ENCODE measurements at regions of chr11 and their contacts with region 1.

Region 1: DNA sequence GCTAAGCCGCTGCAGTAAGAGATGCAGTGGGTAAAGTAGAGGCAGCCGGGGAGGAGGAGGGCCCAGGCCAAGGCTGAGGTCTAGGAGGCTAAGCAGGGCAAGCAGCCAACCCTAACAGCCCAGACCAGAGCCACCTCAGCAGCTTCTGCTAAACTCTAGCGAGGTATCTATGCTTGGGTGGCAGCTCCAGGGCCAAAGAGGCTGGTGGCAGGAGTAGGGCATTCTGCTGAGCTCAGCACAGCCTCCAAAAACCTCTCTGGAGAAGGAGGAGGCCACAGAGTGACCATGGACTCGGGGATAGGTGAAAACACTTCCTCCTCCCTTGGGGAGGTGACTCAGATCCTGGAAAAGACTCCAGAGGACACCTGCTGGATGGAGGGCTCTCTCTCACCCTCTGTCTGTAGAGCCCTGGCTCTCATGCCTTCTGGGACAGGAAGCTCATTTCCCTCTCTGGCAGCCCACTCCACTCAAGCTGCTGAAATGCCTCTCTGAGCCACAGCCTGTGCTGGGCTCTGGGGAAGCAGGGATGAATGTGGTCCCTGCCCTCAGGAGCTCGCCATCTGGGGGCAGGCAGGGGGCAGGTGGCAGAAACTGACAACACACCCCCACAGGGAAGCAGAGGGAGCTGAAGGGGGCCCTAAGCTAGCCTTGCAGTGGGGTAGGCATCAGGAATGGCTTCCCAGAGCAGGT is 16.5 kb upstream of the TPBGL start:
- DNase-seq: no peak
- ATAC-seq: peak; percentile 59
- H3K4me3 ChIP-seq: no peak overlapping the region
- H3K4me1 ChIP-seq: no peaks in the 10 kb centered on the region
- CTCF ChIP-seq: no peak

Region 2: DNA sequence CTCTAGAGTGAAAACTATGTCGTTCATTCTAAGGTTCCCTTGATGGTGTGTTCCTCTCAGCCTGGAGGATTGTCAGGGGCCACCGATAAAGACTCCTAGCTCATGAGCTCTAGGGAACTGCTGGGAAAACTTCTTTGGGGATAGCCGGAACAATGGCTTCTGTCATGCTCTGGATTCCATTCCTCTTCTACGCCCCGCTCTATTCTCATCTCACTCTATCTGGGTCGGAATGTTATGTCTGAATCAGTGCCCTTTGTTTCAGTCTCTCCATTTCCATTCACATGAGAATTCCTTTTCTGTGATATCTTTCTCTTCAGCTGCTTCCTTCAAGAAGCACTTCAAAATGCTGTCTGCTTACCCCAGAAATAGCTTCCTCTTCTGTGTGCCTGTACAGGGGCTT is 90.1 kb before region 1 on chr11:
- intact Hi-C with region 1: loop called in 1 of 2 experiments (anchors 10 kb)
- DNase-seq: no peak
- ATAC-seq: no peak
- H3K4me3 ChIP-seq: no peak overlapping the region
- H3K4me1 ChIP-seq: no peaks in the 10 kb centered on the region
- CTCF ChIP-seq: no peak

Measured in mucosa of descending colon (tissue), 3 donors.